GM13977 (cell line): ENCODE measurements at regions of chr18 and their contacts with region 1.

Region 1: DNA sequence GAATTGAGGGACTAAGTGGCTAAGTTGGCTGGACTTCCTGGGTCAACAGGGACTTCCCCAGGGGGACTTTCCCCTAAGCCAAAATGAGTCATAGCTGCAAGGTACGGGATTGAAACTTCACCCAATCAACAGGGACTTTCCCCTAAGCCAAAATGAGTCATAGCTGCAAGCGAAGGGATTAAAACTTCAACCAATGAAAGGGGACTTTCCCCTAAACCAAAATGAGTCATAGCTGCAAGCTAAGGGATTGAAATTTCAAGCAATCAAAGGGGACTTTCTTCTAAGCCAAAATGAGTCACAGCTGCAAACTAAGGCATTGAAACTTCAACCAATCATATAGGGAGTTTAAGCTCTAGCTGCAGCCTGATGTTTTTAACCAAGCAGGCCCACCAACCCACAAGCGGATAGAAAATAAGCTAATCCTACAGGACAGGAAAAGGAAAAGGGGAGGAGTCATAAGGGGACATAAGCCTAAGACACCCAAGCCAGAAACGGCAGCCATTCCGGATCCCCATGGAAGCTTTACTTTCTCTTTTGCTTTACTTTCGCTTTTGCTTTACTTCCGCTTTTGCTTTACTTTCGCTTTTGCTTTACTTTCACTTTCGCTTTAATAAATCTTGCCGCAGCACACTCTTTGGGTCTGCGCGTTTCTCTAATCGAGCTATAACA is 1375.4 kb upstream of the CELF4 start:
- DNase-seq: peak; percentile 53
- CTCF ChIP-seq: no peak

Region 2: GRCh38 chr18:38611036-38611964 is 329.7 kb before region 1 on chr18:
- in situ Hi-C with region 1: loop called (anchors 25 kb)
- DNase-seq: peak; percentile 11
- CTCF ChIP-seq: no peak